ENCODE measurements at regions of chr3 and their contacts with region 1.

Region 1: GRCh38 chr3:162285259-162285658 is 788.7 kb downstream of the OTOL1 start:
- DNase-seq: peak; percentile 57
- ATAC-seq: peak; percentile 42

Region 2: GRCh38 chr3:162367429-162368260 is 82.4 kb after region 1 on chr3:
- intact Hi-C with region 1: loop called (anchors 2 kb)
- DNase-seq: no peak
- ATAC-seq: peak; percentile 45